ENCODE measurements at regions of chr12 and their contacts with region 1.

Region 1: GRCh38 chr12:114684098-114684869 is at the start of gene TBX3:
- DNase-seq: peak; percentile 99
- ATAC-seq: peak; percentile 81
- H3K4me3 ChIP-seq: peak within 1 kb of the TSS; percentile 69
- H3K27ac ChIP-seq: peak within 1 kb of the TSS; percentile 95
- H3K4me1 ChIP-seq: peaks cover 29% of the 10 kb centered on the region
- H3K27me3 ChIP-seq: no peaks in the 10 kb centered on the region
- CTCF ChIP-seq: peak; percentile 66
- POLR2A ChIP-seq: peak; percentile 98
- RAD21 ChIP-seq: peak; percentile 60
- total RNA-seq, gene TBX3: 15.8 and 18.6 TPM in 2 replicates

Region 2: GRCh38 chr12:114263056-114263805 is 421.1 kb before region 1 on chr12:
- CTCF ChIA-PET with region 1: no interaction called
- POLR2A ChIA-PET with region 1: no interaction called
- dilution Hi-C with region 1: no loop called
- in situ Hi-C with region 1: no loop called
- intact Hi-C with region 1: no loop called
- DNase-seq: no peak
- ATAC-seq: no peak
- H3K4me3 ChIP-seq: no peak overlapping the region
- H3K27ac ChIP-seq: no peak overlapping the region
- H3K4me1 ChIP-seq: no peaks in the 10 kb centered on the region
- H3K27me3 ChIP-seq: no peaks in the 10 kb centered on the region
- CTCF ChIP-seq: no peak
- POLR2A ChIP-seq: no peak
- RAD21 ChIP-seq: no peak

Region 3: GRCh38 chr12:114703060-114703493 is 18.8 kb after region 1 on chr12:
- CTCF ChIA-PET with region 1: interaction called, 4 read pairs
- POLR2A ChIA-PET with region 1: interaction called, 12 read pairs
- dilution Hi-C with region 1: no loop called
- in situ Hi-C with region 1: no loop called
- intact Hi-C with region 1: no loop called
- DNase-seq: no peak
- ATAC-seq: no peak
- H3K4me3 ChIP-seq: no peak overlapping the region
- H3K27ac ChIP-seq: no peak overlapping the region
- H3K4me1 ChIP-seq: peaks cover 12% of the 10 kb centered on the region
- H3K27me3 ChIP-seq: peaks cover 9% of the 10 kb centered on the region
- CTCF ChIP-seq: no peak
- POLR2A ChIP-seq: no peak
- RAD21 ChIP-seq: no peak

Region 4: DNA sequence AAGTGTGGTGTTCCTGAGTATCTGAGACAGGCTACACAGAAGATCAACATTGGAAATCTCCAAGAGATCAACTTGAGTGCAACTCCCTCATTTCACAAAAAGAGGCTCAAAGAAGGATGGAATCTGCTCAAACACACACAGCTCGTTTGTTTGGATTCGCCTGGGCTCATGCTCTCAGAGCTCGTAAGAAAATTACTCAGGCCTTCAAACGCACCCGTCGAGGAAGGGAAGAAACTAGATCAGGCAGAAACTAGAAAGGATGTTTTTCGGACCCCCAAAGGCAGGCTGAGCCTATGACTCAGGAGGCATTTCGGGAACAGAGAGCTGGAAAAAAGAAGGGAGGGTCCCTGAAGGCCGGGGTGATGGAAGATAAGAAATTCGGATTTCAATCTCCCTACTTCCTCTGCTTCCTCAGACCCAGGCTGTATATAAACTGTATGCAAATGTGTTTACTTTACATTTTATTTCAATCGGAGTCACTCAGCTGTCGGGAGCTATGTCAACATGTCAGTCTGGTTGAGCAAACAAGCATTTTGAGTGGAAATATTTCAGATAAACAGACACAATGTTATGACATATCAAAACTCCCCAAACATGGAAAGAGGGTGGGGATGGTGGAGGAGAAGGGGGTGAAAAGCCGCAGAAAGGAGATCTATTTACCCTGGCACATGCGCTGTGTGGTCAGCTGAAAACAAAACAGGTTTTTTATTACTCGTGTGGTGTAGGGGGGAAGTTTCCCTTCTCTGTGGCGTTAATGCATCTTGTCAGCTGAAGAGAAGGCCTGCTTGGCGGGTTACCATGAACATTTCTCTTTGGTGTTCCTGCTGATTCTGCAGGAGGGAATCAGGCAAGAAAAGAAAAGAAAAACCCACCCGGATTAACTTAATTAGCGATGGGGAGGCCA is 128.8 kb after region 1 on chr12:
- CTCF ChIA-PET with region 1: interaction called, 5 read pairs
- POLR2A ChIA-PET with region 1: interaction called, 5 read pairs
- dilution Hi-C with region 1: no loop called
- in situ Hi-C with region 1: no loop called
- intact Hi-C with region 1: loop called (anchors 2 kb)
- DNase-seq: peak; percentile 74
- ATAC-seq: peak; percentile 89
- H3K4me3 ChIP-seq: peak overlapping the region; percentile 7; the same call in 1 of the 2 replicates
- H3K27ac ChIP-seq: peak overlapping the region; percentile 88
- H3K4me1 ChIP-seq: peaks cover 4% of the 10 kb centered on the region; the same call in 1 of the 2 replicates
- H3K27me3 ChIP-seq: no peaks in the 10 kb centered on the region
- CTCF ChIP-seq: no peak
- POLR2A ChIP-seq: no peak
- RAD21 ChIP-seq: no peak

Region 5: DNA sequence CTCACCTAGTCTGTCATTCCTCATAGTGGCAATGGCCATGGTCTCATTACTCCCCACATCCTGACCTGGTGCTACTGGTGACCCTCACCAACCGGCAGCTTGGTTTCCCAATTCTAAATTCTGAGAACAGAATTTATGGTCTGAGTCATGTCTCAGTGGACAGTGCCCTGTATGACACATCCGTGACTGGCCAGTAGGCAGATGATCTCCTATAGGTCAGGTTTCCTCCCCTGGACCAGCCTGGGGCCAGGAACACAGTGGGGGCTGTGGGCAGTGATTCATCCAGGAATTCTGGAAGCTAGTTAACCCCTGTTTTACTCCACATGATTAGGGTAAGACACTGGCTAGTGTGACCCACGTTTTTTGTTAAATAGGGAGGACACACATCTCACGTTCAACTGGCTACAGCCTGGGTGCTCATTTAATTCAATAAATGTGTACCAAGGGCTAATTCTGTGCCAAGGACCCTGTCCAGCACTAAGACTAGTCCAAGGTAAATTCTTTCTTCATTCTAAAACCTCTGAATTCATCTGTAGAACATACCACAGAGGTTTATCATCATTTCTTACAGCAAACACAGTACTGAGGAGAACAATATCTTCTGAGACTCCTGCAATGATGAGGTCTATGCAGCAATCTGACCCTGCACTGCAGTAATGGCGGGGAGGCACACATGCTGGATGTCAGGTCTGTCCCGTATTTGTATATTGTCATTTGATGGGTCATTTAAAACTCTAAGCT is 249.3 kb after region 1 on chr12:
- CTCF ChIA-PET with region 1: interaction called, 11 read pairs
- POLR2A ChIA-PET with region 1: no interaction called
- dilution Hi-C with region 1: no loop called
- in situ Hi-C with region 1: no loop called
- intact Hi-C with region 1: loop called (anchors 5 kb)
- DNase-seq: peak; percentile 94
- ATAC-seq: peak; percentile 97
- H3K4me3 ChIP-seq: no peak overlapping the region
- H3K27ac ChIP-seq: peak overlapping the region; percentile 28; the same call in 1 of the 2 replicates
- H3K4me1 ChIP-seq: peaks cover 7% of the 10 kb centered on the region
- H3K27me3 ChIP-seq: no peaks in the 10 kb centered on the region
- CTCF ChIP-seq: no peak
- POLR2A ChIP-seq: no peak; the same call in 1 of the 2 replicates
- RAD21 ChIP-seq: 0 out of 2 replicates have a peak, but pooled peaks have one; percentile 11

Region 6: GRCh38 chr12:115166698-115167315 is 482.5 kb after region 1 on chr12:
- CTCF ChIA-PET with region 1: interaction called, 3 read pairs
- POLR2A ChIA-PET with region 1: interaction called, 3 read pairs
- dilution Hi-C with region 1: no loop called
- in situ Hi-C with region 1: no loop called
- intact Hi-C with region 1: loop called (anchors 1 kb)
- DNase-seq: peak; percentile 47
- ATAC-seq: peak; percentile 68
- H3K4me3 ChIP-seq: no peak overlapping the region
- H3K27ac ChIP-seq: no peak overlapping the region
- H3K4me1 ChIP-seq: no peaks in the 10 kb centered on the region; the same call in 1 of the 2 replicates
- H3K27me3 ChIP-seq: no peaks in the 10 kb centered on the region
- CTCF ChIP-seq: peak; percentile 42
- POLR2A ChIP-seq: no peak
- RAD21 ChIP-seq: peak; percentile 57

Region 7: GRCh38 chr12:115632308-115632707 is 948.0 kb after region 1 on chr12:
- CTCF ChIA-PET with region 1: no interaction called
- POLR2A ChIA-PET with region 1: no interaction called
- dilution Hi-C with region 1: no loop called
- in situ Hi-C with region 1: no loop called
- intact Hi-C with region 1: loop called (anchors 5 kb)
- DNase-seq: peak; percentile 28
- ATAC-seq: no peak
- H3K4me3 ChIP-seq: no peak overlapping the region
- H3K27ac ChIP-seq: no peak overlapping the region
- H3K4me1 ChIP-seq: no peaks in the 10 kb centered on the region
- H3K27me3 ChIP-seq: no peaks in the 10 kb centered on the region; the same call in 1 of the 2 replicates
- CTCF ChIP-seq: peak; percentile 36
- POLR2A ChIP-seq: no peak
- RAD21 ChIP-seq: peak; percentile 52